Left cardiac atrium (tissue), 4 donors: ENCODE measurements at regions of chr14 and their contacts with region 1.

Region 1: DNA sequence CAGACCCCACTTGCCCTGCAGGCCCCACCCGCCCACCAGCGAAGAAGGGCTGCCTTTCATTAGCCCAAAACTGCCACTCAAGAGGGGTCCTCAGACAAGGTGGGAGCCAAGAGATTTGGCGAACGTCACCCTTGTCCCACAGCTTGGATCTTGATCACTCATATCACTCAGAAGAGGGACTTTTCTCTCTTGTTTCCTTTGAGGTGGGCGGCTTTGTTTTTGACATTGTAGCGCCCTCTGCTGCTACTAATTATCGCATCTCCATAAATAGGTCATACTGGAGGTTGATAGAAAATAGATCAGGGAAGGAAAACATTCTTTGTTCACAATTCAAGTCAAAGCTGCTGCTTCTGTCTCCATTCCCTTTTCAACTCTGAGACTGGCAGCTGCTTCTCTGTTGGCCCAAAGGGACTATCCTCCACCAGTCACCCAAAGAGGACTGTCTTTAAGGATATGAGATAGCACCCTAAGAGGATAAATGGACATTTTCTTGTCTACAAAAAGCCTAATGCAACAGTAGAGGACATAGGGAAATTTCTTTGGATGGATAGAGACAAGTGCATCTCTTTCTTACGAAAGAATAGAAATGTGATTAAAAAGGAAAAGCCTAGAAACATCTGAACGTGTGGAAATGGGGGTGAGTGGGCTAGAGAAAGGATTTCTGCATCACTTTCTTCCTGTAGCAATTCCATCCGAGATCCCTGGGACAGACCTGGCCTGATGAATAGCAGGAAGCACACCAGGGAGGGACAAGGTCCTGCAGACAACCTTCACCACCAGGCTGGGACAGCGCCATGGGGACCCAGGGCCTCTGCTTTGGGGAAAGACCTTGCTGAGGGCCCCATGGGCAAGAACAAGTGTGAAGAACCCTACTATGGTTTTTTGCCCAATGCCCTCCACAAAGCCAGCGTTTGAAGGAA is 115.8 kb downstream of the DAD1 start:
- DNase-seq: no peak
- ATAC-seq: peak; percentile 36 to 60

Region 2: GRCh38 chr14:21014761-21015190 is 1458.4 kb before region 1 on chr14:
- intact Hi-C with region 1: no loop called
- DNase-seq: peak; percentile 81
- ATAC-seq: peak; percentile 78 to 87

Region 3: DNA sequence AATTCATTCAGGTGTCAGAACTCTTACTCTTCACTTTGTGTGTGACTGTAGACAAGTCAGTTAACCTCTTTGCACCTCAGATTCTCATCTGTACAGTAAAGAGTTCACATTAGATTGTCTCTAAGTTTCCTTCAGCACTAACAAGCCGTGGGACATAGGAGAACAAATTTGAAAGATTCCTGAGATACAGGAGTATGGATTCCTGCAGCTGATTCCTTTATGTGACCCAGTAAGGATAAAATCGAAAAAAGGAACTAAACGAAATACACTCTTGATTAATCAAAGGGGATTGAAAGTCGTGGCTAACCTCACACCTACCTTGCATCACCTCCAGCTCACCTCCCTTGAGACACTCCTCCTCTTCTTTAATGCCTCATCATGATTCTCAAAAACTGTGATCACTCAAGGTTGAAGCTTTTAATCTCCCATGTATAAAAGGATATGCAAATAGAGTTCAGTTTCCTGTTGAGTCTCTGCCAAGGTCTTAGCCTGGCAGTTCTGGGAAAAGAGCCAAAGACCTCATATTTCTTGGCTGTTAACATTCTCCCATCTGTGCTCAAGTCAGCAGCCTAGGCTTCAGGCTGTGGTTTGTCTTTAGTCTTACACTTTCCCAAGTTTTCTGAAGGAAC is 40.7 kb before region 1 on chr14:
- intact Hi-C with region 1: loop called in 1 of 2 experiments (anchors 5 kb)
- DNase-seq: no peak
- ATAC-seq: peak; percentile 87 to 88

Region 4: GRCh38 chr14:22505697-22506377 is 32.6 kb after region 1 on chr14:
- intact Hi-C with region 1: no loop called
- DNase-seq: no peak
- ATAC-seq: no peak

Region 5: GRCh38 chr14:22689186-22689585 is 216.0 kb after region 1 on chr14:
- intact Hi-C with region 1: no loop called
- DNase-seq: no peak
- ATAC-seq: peak in 1 of 2 donors; percentile 47